MCF 10A (cell line): ENCODE measurements at regions of chr11 and their contacts with region 1.

Region 1: DNA sequence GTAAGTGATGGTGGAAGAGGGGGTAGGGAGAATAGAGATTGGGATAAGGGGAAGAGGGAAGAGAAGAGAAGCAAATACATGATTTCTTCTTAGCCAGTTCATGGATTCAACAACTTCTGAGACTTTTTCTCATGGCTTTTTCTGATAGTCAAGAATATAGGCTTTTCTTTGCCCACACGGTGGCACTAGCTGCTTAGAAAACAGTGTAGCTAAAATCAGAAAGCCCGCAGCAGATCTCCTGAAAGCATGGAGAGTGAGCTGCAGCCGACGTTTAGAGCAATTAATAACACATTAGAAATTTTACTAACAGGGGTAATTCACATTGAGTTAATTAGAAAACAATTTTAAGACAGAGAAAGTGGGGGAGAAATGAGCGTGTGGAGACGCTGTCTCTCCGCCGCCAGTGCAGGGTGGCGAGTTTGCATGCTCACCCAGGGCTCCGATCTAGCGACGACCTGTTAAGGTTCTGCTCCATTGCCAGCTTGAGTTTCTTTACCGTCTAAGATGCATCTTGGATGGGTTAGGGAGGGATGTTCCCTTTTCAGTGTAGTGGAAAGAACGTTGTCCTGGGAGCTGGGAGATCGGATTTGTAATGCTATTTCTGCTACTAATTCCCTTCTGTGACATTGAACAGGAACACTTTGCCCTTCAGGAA is 3.3 kb upstream of the RAG1 start:
- DNase-seq: peak; percentile 71
- H3K4me3 Mint-ChIP-seq: peak overlapping the region; percentile 71
- H3K27ac Mint-ChIP-seq: peak overlapping the region; percentile 8
- H3K4me1 Mint-ChIP-seq: no peaks in the 10 kb centered on the region
- H3K27me3 Mint-ChIP-seq: peaks cover 44% of the 10 kb centered on the region
- CTCF ChIP-seq: peak; percentile 61

Region 2: GRCh38 chr11:36312611-36313472 is 251.7 kb before region 1 on chr11:
- CTCF ChIA-PET with region 1: no interaction called
- POLR2A ChIA-PET with region 1: no interaction called
- intact Hi-C with region 1: no loop called
- DNase-seq: peak; percentile 83
- H3K4me3 Mint-ChIP-seq: no peak overlapping the region
- H3K27ac Mint-ChIP-seq: peak overlapping the region; percentile 57
- H3K4me1 Mint-ChIP-seq: peaks cover 43% of the 10 kb centered on the region
- H3K27me3 Mint-ChIP-seq: no peaks in the 10 kb centered on the region
- CTCF ChIP-seq: no peak

Region 3: GRCh38 chr11:36469063-36469462 is 95.4 kb before region 1 on chr11:
- CTCF ChIA-PET with region 1: no interaction called
- POLR2A ChIA-PET with region 1: no interaction called
- intact Hi-C with region 1: no loop called
- DNase-seq: peak; percentile 14
- H3K4me3 Mint-ChIP-seq: no peak overlapping the region
- H3K27ac Mint-ChIP-seq: no peak overlapping the region
- H3K4me1 Mint-ChIP-seq: peaks cover 18% of the 10 kb centered on the region
- H3K27me3 Mint-ChIP-seq: no peaks in the 10 kb centered on the region
- CTCF ChIP-seq: no peak

Region 4: GRCh38 chr11:36541001-36541400 is 23.5 kb before region 1 on chr11:
- CTCF ChIA-PET with region 1: interaction called, 10 read pairs
- POLR2A ChIA-PET with region 1: no interaction called
- intact Hi-C with region 1: no loop called
- DNase-seq: peak; percentile 57
- H3K4me3 Mint-ChIP-seq: no peak overlapping the region
- H3K27ac Mint-ChIP-seq: no peak overlapping the region
- H3K4me1 Mint-ChIP-seq: no peaks in the 10 kb centered on the region
- H3K27me3 Mint-ChIP-seq: peaks cover 22% of the 10 kb centered on the region
- CTCF ChIP-seq: peak; percentile 33

Region 5: GRCh38 chr11:36586543-36586942 is 22.0 kb after region 1 on chr11:
- CTCF ChIA-PET with region 1: interaction called, 22 read pairs
- POLR2A ChIA-PET with region 1: no interaction called
- intact Hi-C with region 1: no loop called
- DNase-seq: no peak
- H3K4me3 Mint-ChIP-seq: no peak overlapping the region
- H3K27ac Mint-ChIP-seq: no peak overlapping the region
- H3K4me1 Mint-ChIP-seq: no peaks in the 10 kb centered on the region
- H3K27me3 Mint-ChIP-seq: peaks cover 83% of the 10 kb centered on the region
- CTCF ChIP-seq: no peak

Region 6: GRCh38 chr11:36622431-36623136 is 58.1 kb after region 1 on chr11:
- CTCF ChIA-PET with region 1: interaction called, 12 read pairs
- POLR2A ChIA-PET with region 1: no interaction called
- intact Hi-C with region 1: loop called (anchors 1 kb)
- DNase-seq: peak; percentile 39
- H3K4me3 Mint-ChIP-seq: no peak overlapping the region
- H3K27ac Mint-ChIP-seq: no peak overlapping the region
- H3K4me1 Mint-ChIP-seq: peaks cover 6% of the 10 kb centered on the region
- H3K27me3 Mint-ChIP-seq: no peaks in the 10 kb centered on the region
- CTCF ChIP-seq: peak; percentile 27

Region 7: GRCh38 chr11:36693139-36693843 is 128.8 kb after region 1 on chr11:
- CTCF ChIA-PET with region 1: interaction called, 19 read pairs
- POLR2A ChIA-PET with region 1: no interaction called
- intact Hi-C with region 1: no loop called
- DNase-seq: no peak
- H3K4me3 Mint-ChIP-seq: no peak overlapping the region
- H3K27ac Mint-ChIP-seq: no peak overlapping the region
- H3K4me1 Mint-ChIP-seq: no peaks in the 10 kb centered on the region
- H3K27me3 Mint-ChIP-seq: no peaks in the 10 kb centered on the region
- CTCF ChIP-seq: no peak